ENCODE measurements at regions of chr13 and their contacts with region 1.

Region 1: GRCh38 chr13:90717451-90717936 is 630.0 kb upstream of the MIR17HG start:
- DNase-seq: peak; percentile 10
- ATAC-seq: no peak
- H3K4me3 ChIP-seq: no peak overlapping the region
- H3K27ac ChIP-seq: no peak overlapping the region
- H3K4me1 ChIP-seq: no peaks in the 10 kb centered on the region
- H3K27me3 ChIP-seq: no peaks in the 10 kb centered on the region
- CTCF ChIP-seq: no peak
- POLR2A ChIP-seq: no peak
- RAD21 ChIP-seq: no peak

Region 2: DNA sequence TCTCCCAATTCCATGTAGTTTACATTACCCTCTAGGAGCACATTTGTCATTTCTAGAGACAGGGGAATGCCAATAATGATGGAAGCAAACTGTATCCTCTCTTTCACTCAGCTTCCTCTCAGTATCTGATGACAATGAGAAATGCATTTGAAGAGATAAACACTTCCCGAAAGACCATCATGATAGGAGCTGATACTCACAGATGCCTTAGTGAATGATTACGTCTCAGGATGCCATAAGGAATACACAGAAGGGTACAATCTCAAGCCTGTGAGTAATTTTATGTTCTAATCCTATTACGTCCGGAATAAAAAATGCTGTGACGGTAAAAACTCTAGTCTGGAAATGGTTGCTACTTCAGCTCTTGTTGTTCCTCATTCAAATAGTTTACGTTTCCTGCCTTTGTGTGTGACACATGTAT is 33.8 kb before region 1 on chr13:
- CTCF ChIA-PET with region 1: no interaction called
- POLR2A ChIA-PET with region 1: no interaction called
- dilution Hi-C with region 1: no loop called
- in situ Hi-C with region 1: no loop called
- intact Hi-C with region 1: no loop called
- DNase-seq: peak; percentile 56
- ATAC-seq: no peak
- H3K4me3 ChIP-seq: no peak overlapping the region
- H3K27ac ChIP-seq: no peak overlapping the region
- H3K4me1 ChIP-seq: no peaks in the 10 kb centered on the region
- H3K27me3 ChIP-seq: no peaks in the 10 kb centered on the region
- CTCF ChIP-seq: no peak
- POLR2A ChIP-seq: no peak
- RAD21 ChIP-seq: no peak

Region 3: GRCh38 chr13:90696254-90696653 is 21.2 kb before region 1 on chr13:
- CTCF ChIA-PET with region 1: no interaction called
- POLR2A ChIA-PET with region 1: no interaction called
- dilution Hi-C with region 1: no loop called
- in situ Hi-C with region 1: no loop called
- intact Hi-C with region 1: loop called (anchors 1 kb)
- DNase-seq: peak; percentile 7
- ATAC-seq: no peak
- H3K4me3 ChIP-seq: no peak overlapping the region
- H3K27ac ChIP-seq: no peak overlapping the region
- H3K4me1 ChIP-seq: no peaks in the 10 kb centered on the region
- H3K27me3 ChIP-seq: no peaks in the 10 kb centered on the region
- CTCF ChIP-seq: no peak
- POLR2A ChIP-seq: no peak
- RAD21 ChIP-seq: no peak

Region 4: DNA sequence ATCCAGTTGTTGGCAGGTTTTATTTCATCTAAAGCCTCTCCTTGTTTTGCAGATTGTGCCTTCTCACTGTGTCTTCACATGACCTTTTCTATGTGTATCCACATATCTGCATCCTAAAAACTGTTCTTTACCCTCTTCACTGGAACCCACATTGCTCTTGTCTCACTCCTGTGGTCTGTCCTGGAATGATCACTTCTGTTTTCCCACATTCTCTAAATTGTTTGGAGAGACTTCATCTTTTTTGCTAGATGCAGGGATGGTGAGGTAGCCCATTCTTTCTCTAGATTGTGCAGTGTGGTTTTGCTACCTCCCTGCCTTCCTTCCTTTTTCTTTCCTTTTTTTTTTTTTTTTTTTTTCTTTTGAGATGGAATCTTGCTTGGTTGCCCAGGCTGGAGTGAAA is 21.4 kb after region 1 on chr13:
- CTCF ChIA-PET with region 1: no interaction called
- POLR2A ChIA-PET with region 1: no interaction called
- dilution Hi-C with region 1: no loop called
- in situ Hi-C with region 1: no loop called
- intact Hi-C with region 1: no loop called
- DNase-seq: no peak
- ATAC-seq: no peak
- H3K4me3 ChIP-seq: no peak overlapping the region
- H3K27ac ChIP-seq: no peak overlapping the region
- H3K4me1 ChIP-seq: no peaks in the 10 kb centered on the region
- H3K27me3 ChIP-seq: no peaks in the 10 kb centered on the region
- CTCF ChIP-seq: no peak
- POLR2A ChIP-seq: no peak
- RAD21 ChIP-seq: no peak

Region 5: GRCh38 chr13:90757127-90757680 is 39.7 kb after region 1 on chr13:
- CTCF ChIA-PET with region 1: no interaction called
- POLR2A ChIA-PET with region 1: no interaction called
- dilution Hi-C with region 1: no loop called
- in situ Hi-C with region 1: no loop called
- intact Hi-C with region 1: no loop called
- DNase-seq: no peak
- ATAC-seq: no peak
- H3K4me3 ChIP-seq: no peak overlapping the region
- H3K27ac ChIP-seq: no peak overlapping the region
- H3K4me1 ChIP-seq: no peaks in the 10 kb centered on the region
- H3K27me3 ChIP-seq: no peaks in the 10 kb centered on the region
- CTCF ChIP-seq: no peak
- POLR2A ChIP-seq: no peak
- RAD21 ChIP-seq: no peak